A673 (cell line): ENCODE measurements at regions of chr12 and their contacts with region 1.

Region 1: GRCh38 chr12:80195074-80195726 is 95.9 kb downstream of the OTOGL start:
- DNase-seq: peak; percentile 76
- H3K4me3 ChIP-seq: no peak overlapping the region
- H3K27ac ChIP-seq: no peak overlapping the region
- H3K4me1 ChIP-seq: no peaks in the 10 kb centered on the region
- H3K27me3 ChIP-seq: no peaks in the 10 kb centered on the region
- CTCF ChIP-seq: peak; percentile 80

Region 2: GRCh38 chr12:80068173-80068572 is 127.0 kb before region 1 on chr12:
- CTCF ChIA-PET with region 1: no interaction called
- POLR2A ChIA-PET with region 1: no interaction called
- intact Hi-C with region 1: no loop called
- DNase-seq: no peak
- H3K4me3 ChIP-seq: no peak overlapping the region
- H3K27ac ChIP-seq: no peak overlapping the region
- H3K4me1 ChIP-seq: no peaks in the 10 kb centered on the region
- H3K27me3 ChIP-seq: no peaks in the 10 kb centered on the region
- CTCF ChIP-seq: no peak

Region 3: GRCh38 chr12:80154261-80154660 is 40.9 kb before region 1 on chr12:
- CTCF ChIA-PET with region 1: no interaction called
- POLR2A ChIA-PET with region 1: no interaction called
- intact Hi-C with region 1: no loop called
- DNase-seq: no peak
- H3K4me3 ChIP-seq: no peak overlapping the region
- H3K27ac ChIP-seq: no peak overlapping the region
- H3K4me1 ChIP-seq: no peaks in the 10 kb centered on the region
- H3K27me3 ChIP-seq: no peaks in the 10 kb centered on the region
- CTCF ChIP-seq: no peak

Region 4: DNA sequence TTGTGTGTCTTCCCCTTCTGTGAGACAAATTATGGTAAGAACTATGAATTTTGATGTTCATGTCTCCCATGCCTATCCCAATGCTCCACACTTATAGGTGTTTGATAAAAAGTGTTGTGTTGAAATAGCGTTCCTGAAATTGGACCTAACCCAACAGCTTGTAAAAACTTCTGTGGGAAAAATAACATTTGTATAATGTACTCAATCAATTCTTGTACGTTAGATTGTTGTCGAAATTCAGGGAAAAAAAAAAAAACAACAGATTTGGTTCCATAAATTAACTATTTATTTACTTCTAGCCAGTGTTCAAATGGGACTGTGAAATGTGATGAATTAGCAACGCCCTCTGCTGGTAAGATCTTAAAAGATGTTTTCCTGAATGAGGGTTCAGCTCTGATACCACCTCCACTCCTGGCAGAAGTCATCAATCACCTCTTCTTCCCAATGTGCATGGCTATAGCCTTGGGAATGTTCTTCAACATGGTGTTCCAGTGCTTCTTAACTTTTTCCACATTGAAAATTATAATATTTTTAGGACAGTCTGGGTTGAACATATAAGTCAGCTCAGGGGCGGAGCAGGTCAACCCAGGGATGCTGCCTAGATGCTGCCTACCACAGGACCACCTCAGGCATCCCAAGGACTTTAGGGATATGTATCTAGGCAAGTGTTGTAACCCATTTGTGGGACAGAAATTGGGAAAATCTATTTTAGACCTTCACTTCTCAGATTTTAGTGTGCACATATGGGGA is 74.8 kb after region 1 on chr12:
- CTCF ChIA-PET with region 1: interaction called, 69 read pairs
- POLR2A ChIA-PET with region 1: no interaction called
- intact Hi-C with region 1: loop called (anchors 1 kb)
- DNase-seq: peak; percentile 67
- H3K4me3 ChIP-seq: no peak overlapping the region
- H3K27ac ChIP-seq: no peak overlapping the region
- H3K4me1 ChIP-seq: peaks cover 17% of the 10 kb centered on the region
- H3K27me3 ChIP-seq: no peaks in the 10 kb centered on the region
- CTCF ChIP-seq: peak; percentile 78

Region 5: DNA sequence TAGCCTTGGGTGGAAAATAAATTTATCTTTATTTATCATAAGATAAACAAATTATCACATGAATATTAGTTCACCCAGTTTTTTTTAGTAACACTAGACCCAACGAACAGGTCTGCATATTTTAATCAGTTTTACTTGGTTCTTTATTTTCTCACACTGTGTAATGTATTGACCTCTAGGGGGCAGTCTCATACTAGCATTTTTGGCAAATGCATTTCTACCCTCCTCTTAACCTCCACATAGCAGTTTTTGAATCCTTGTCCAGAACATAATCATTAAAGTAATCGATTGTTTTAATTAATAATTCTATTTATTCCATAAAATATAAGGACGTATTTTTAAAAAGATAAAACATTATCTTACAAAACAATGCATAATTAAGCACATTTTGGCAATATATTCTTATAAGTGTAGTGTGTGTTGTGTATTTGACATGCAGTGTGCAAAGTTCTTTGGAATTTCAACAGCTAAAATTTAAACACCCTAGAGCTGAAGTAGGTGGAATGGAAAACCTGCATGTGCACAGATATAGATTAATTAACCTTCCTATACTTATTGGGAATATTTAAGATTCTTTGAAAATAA is 217.3 kb after region 1 on chr12:
- CTCF ChIA-PET with region 1: no interaction called
- POLR2A ChIA-PET with region 1: no interaction called
- intact Hi-C with region 1: loop called (anchors 2 kb)
- DNase-seq: peak; percentile 81
- H3K4me3 ChIP-seq: no peak overlapping the region
- H3K27ac ChIP-seq: no peak overlapping the region
- H3K4me1 ChIP-seq: peaks cover 4% of the 10 kb centered on the region
- H3K27me3 ChIP-seq: no peaks in the 10 kb centered on the region
- CTCF ChIP-seq: peak; percentile 79

Region 6: GRCh38 chr12:80763874-80764273 is 568.7 kb after region 1 on chr12:
- CTCF ChIA-PET with region 1: no interaction called
- POLR2A ChIA-PET with region 1: no interaction called
- intact Hi-C with region 1: loop called (anchors 2 kb)
- DNase-seq: peak; percentile 74
- H3K4me3 ChIP-seq: no peak overlapping the region
- H3K27ac ChIP-seq: no peak overlapping the region
- H3K4me1 ChIP-seq: peaks cover 7% of the 10 kb centered on the region
- H3K27me3 ChIP-seq: no peaks in the 10 kb centered on the region
- CTCF ChIP-seq: peak; percentile 77

Region 7: GRCh38 chr12:80936498-80937390 is 741.5 kb after region 1 on chr12:
- CTCF ChIA-PET with region 1: no interaction called
- POLR2A ChIA-PET with region 1: no interaction called
- intact Hi-C with region 1: loop called (anchors 10 kb)
- DNase-seq: peak; percentile 64
- H3K4me3 ChIP-seq: peak overlapping the region; percentile 71
- H3K27ac ChIP-seq: peak overlapping the region; percentile 87
- H3K4me1 ChIP-seq: peaks cover 15% of the 10 kb centered on the region
- H3K27me3 ChIP-seq: no peaks in the 10 kb centered on the region
- CTCF ChIP-seq: no peak